Mammary epithelial cell (primary cell): ENCODE measurements at regions of chr17 and their contacts with region 1.

Region 1: GRCh38 chr17:69607162-69607834 is 192.8 kb downstream of the MAP2K6 start:
- DNase-seq: peak; percentile 75
- H3K4me3 ChIP-seq: no peak overlapping the region
- H3K27ac ChIP-seq: peak overlapping the region; percentile 37
- H3K4me1 ChIP-seq: peaks cover 27% of the 10 kb centered on the region
- H3K27me3 ChIP-seq: no peaks in the 10 kb centered on the region
- CTCF ChIP-seq: peak; percentile 84 to 94

Region 2: DNA sequence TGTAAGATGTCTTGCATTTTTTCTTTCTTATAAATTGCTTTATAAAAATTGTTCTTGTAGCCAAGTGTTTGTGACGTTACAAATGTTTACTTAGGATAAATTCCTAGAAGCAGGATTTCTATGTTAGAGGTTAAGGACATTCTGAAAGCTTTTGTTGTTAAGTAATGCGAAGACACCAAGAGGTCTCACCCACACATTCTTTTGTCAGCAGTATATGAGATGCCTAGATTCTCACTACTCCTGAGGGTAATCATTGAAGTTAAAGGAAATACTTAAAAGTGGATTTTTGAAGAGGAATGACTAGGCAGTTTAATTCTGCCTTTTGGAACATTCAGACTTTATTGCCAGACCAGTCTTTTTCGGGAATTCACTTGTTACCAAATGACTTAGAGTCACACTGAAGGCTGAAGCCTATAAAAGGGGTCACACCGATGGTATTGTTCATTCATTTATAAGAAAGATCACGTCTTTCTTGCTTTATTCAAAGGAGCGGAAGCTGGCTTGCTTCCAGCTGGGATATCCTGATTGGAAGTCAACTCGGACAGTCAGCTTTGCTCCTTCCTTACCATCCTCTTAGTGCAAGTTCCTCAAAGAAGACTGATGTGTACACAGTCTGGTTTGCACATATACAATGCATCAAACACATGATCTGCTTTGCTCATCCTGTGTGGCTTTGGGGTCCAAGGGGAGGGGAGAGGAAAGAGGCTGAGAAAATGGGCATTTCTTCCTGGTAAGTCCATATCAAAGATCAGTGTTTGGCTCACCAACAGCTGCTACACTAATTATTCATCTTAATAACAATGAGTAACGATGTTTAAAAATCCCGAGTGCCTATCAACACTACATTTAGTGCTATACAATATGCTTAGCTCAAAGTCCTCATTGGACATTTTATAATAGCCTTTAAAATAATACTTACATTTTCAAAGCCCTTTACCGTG is 32.8 kb before region 1 on chr17:
- CTCF ChIA-PET with region 1: interaction called, 10 read pairs
- dilution Hi-C with region 1: no loop called
- in situ Hi-C with region 1: no loop called
- intact Hi-C with region 1: no loop called
- DNase-seq: no peak
- H3K4me3 ChIP-seq: no peak overlapping the region
- H3K27ac ChIP-seq: no peak overlapping the region
- H3K4me1 ChIP-seq: no peaks in the 10 kb centered on the region
- H3K27me3 ChIP-seq: no peaks in the 10 kb centered on the region
- CTCF ChIP-seq: no peak

Region 3: GRCh38 chr17:69637446-69638156 is 30.3 kb after region 1 on chr17:
- CTCF ChIA-PET with region 1: no interaction called
- dilution Hi-C with region 1: no loop called
- in situ Hi-C with region 1: no loop called
- intact Hi-C with region 1: no loop called
- DNase-seq: peak; percentile 16
- H3K4me3 ChIP-seq: no peak overlapping the region
- H3K27ac ChIP-seq: no peak overlapping the region
- H3K4me1 ChIP-seq: no peaks in the 10 kb centered on the region
- H3K27me3 ChIP-seq: no peaks in the 10 kb centered on the region
- CTCF ChIP-seq: no peak

Region 4: GRCh38 chr17:69812240-69812837 is 205.0 kb after region 1 on chr17:
- CTCF ChIA-PET with region 1: no interaction called
- dilution Hi-C with region 1: no loop called
- in situ Hi-C with region 1: no loop called
- intact Hi-C with region 1: loop called (anchors 5 kb)
- DNase-seq: peak; percentile 78
- H3K4me3 ChIP-seq: no peak overlapping the region
- H3K27ac ChIP-seq: peak overlapping the region; percentile 32
- H3K4me1 ChIP-seq: peaks cover 30% of the 10 kb centered on the region
- H3K27me3 ChIP-seq: no peaks in the 10 kb centered on the region
- CTCF ChIP-seq: no peak

Region 5: GRCh38 chr17:69978056-69978646 is 370.9 kb after region 1 on chr17:
- CTCF ChIA-PET with region 1: no interaction called
- dilution Hi-C with region 1: no loop called
- in situ Hi-C with region 1: no loop called
- intact Hi-C with region 1: loop called (anchors 10 kb)
- DNase-seq: peak; percentile 45
- H3K4me3 ChIP-seq: no peak overlapping the region
- H3K27ac ChIP-seq: no peak overlapping the region
- H3K4me1 ChIP-seq: no peaks in the 10 kb centered on the region
- H3K27me3 ChIP-seq: no peaks in the 10 kb centered on the region
- CTCF ChIP-seq: no peak

Region 6: DNA sequence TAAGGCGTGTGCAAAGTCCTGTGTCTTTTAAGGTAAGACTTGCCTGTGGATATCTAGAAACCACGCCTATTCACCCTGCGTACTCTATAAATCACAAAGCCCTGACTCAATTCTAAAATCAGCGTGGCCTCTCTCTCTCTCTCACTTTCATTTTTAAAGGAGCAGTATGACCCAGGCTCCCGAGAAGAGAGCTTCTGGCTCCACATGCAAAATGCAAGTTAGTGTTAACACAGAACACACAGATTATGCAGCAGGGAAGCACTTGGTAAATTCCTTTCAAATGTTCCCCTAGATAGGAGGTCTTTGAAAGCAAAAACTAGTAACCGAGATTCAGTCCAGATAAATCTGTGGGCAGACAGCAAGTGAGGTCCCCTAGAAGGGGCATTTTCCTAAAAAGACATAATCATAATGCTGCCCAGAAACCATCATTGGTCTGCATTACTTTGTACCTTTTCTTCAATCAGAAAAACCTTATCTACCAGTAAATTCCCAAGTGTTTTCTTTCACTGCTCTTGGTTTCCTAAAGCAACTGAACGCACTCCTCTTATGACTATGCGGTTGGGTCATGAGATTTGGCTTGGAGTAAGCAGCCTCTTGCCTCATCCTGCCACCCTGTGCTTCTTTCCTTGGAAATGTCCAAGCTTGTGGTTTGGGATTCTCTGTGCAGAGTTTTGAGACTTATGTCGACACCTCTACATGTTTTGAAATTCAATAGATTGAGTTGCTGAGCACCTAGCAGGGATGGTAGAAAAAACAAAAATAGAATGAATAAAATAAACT is 530.3 kb after region 1 on chr17:
- CTCF ChIA-PET with region 1: no interaction called
- dilution Hi-C with region 1: no loop called
- in situ Hi-C with region 1: no loop called
- intact Hi-C with region 1: loop called (anchors 1 kb)
- DNase-seq: peak; percentile 84
- H3K4me3 ChIP-seq: peak overlapping the region; percentile 39 to 46 (median 39)
- H3K27ac ChIP-seq: peak overlapping the region; percentile 95
- H3K4me1 ChIP-seq: peaks cover 20% of the 10 kb centered on the region
- H3K27me3 ChIP-seq: no peaks in the 10 kb centered on the region
- CTCF ChIP-seq: peak in 1 of 2 donors; percentile 12

Region 7: GRCh38 chr17:70168977-70169708 is 561.8 kb after region 1 on chr17 and contains the start of gene KCNJ2:
- CTCF ChIA-PET with region 1: no interaction called
- dilution Hi-C with region 1: no loop called
- in situ Hi-C with region 1: no loop called
- intact Hi-C with region 1: loop called (anchors 1 kb)
- DNase-seq: peak; percentile 74
- H3K4me3 ChIP-seq: peak within 1 kb of the TSS; percentile 59 to 64 (median 60)
- H3K27ac ChIP-seq: no peak within 1 kb of the TSS
- H3K4me1 ChIP-seq: peaks cover 31% of the 10 kb centered on the region
- H3K27me3 ChIP-seq: no peaks in the 10 kb centered on the region
- CTCF ChIP-seq: no peak
- total RNA-seq, gene KCNJ2: 0.26 to 4.3 TPM

Region 8: GRCh38 chr17:70622368-70623260 is 1015.3 kb after region 1 on chr17:
- CTCF ChIA-PET with region 1: no interaction called
- dilution Hi-C with region 1: no loop called
- in situ Hi-C with region 1: no loop called
- intact Hi-C with region 1: loop called (anchors 5 kb)
- DNase-seq: peak; percentile 30
- H3K4me3 ChIP-seq: no peak overlapping the region
- H3K27ac ChIP-seq: no peak overlapping the region
- H3K4me1 ChIP-seq: no peaks in the 10 kb centered on the region
- H3K27me3 ChIP-seq: no peaks in the 10 kb centered on the region
- CTCF ChIP-seq: peak; percentile 67 to 85